Right cardiac atrium (tissue), 5 donors: ENCODE measurements at regions of chr11 and their contacts with region 1.

Region 1: GRCh38 chr11:18395735-18396504 is 1.6 kb downstream of the LDHA start:
- DNase-seq: peak; percentile 99 to 100 (median 99)
- ATAC-seq: peak; percentile 92 to 96
- H3K4me3 ChIP-seq: peak overlapping the region; percentile 89
- H3K27ac ChIP-seq: peak overlapping the region; percentile 94
- H3K4me1 ChIP-seq: no peaks in the 10 kb centered on the region
- H3K27me3 ChIP-seq: no peaks in the 10 kb centered on the region

Region 2: DNA sequence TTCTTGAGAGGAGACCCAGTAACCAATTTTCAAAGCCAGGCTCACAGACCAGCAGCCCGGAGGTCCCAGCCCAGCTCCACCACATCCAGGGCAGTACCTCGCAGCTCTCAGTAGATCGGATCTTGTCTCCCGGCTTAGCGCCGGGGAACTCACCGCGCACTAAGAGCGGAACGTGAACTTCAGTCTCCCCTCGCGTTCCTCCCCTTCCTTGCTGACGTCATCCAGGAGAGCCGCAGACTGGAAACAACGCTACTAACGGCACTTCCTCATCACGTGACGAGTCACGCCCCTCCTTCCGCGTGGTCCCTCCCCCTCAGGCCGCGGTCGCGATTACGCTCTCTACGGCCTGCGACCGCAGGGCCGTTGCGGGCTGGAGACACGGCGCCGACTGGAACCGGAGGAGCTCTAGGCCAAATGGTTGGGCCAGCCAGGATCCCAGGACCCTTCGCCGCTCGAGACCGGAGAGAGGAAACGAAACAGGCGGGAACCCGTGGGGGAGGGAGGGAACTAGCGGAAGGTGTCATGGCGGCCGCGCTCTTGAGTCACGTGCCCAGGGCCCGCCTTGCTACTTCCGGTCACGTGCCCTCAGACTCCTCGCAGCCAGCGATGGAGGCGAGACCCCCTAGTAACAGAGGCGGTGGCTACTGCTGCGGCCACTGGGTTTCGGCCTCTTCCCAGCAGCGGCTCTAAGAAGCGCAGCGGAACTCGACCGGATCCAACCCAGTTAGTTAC is 73.8 kb before region 1 on chr11 and contains the starts of genes GTF2H1 and HPS5:
- intact Hi-C with region 1: loop called in 1 of 4 experiments (anchors 5 kb)
- DNase-seq: peak; percentile 96 to 98 (median 97)
- ATAC-seq: peak; percentile 99
- H3K4me3 ChIP-seq: peak within 1 kb of the TSS; percentile 80
- H3K27ac ChIP-seq: peak within 1 kb of the TSS; percentile 82
- H3K4me1 ChIP-seq: peaks cover 5% of the 10 kb centered on the region
- H3K27me3 ChIP-seq: no peaks in the 10 kb centered on the region
- total RNA-seq, gene GTF2H1: 23.9 to 26.3 (median 24.5) TPM
- total RNA-seq, gene HPS5: 12.3 to 13.7 (median 12.6) TPM

Region 3: GRCh38 chr11:18347471-18348125 is 48.3 kb before region 1 on chr11:
- intact Hi-C with region 1: no loop called
- DNase-seq: no peak
- ATAC-seq: no peak
- H3K4me3 ChIP-seq: no peak overlapping the region
- H3K27ac ChIP-seq: no peak overlapping the region
- H3K4me1 ChIP-seq: no peaks in the 10 kb centered on the region
- H3K27me3 ChIP-seq: no peaks in the 10 kb centered on the region

Region 4: GRCh38 chr11:18449251-18449650 is 53.3 kb after region 1 on chr11:
- intact Hi-C with region 1: no loop called
- DNase-seq: no peak
- ATAC-seq: no peak
- H3K4me3 ChIP-seq: no peak overlapping the region
- H3K27ac ChIP-seq: no peak overlapping the region
- H3K4me1 ChIP-seq: no peaks in the 10 kb centered on the region
- H3K27me3 ChIP-seq: no peaks in the 10 kb centered on the region

Region 5: DNA sequence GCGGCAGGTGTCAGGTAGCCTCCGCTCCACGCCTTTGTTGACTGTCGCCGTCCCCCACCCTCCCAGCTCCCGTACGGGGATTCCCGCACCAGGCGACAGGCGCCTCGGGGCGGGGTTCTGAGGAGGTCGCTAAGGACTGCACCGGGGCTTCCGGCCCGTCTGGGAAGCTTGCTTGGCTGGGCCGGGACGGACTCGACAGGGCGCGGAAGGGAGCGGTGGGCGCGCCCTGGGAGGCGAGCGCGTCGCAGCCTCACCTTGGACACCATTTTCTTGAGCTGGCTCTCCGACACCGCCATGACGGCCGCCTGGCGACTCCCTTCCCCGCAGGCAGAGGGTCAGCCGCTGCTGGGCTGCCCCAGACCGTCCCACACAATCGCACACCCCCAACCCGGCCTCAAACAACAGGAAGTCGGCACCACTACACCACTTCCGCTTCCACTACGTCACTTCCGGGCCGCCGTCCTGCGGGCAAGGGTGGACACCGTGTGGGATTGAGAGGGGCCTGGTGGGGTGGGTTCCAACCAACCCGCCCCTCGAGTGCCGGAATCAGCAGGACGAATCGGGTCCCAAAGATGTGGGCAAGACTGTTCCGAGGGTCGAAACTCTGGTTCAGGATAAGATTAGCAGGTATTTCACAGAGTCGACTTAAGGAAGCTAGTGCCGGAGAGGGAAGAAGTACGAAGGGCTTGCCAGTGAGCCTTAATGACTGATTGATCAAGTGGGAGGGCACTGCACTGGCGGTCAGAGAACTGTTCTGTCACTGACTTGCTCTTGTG is 130.8 kb after region 1 on chr11 and contains the start of gene TSG101:
- intact Hi-C with region 1: loop called in 1 of 4 experiments (anchors 10 kb)
- DNase-seq: peak; percentile 95 to 98 (median 97)
- ATAC-seq: peak; percentile 100
- H3K4me3 ChIP-seq: peak within 1 kb of the TSS; percentile 65
- H3K27ac ChIP-seq: peak within 1 kb of the TSS; percentile 91
- H3K4me1 ChIP-seq: no peaks in the 10 kb centered on the region
- H3K27me3 ChIP-seq: no peaks in the 10 kb centered on the region
- total RNA-seq, gene TSG101: 52.2 to 58.4 (median 56.0) TPM